Left ventricle myocardium superior (tissue), 1 donor: ENCODE measurements at regions of chr2 and their contacts with region 1.

Region 1: GRCh38 chr2:223101340-223102039 is 49.5 kb downstream of the KCNE4 start:
- DNase-seq: no peak
- ATAC-seq: peak; percentile 65

Region 2: DNA sequence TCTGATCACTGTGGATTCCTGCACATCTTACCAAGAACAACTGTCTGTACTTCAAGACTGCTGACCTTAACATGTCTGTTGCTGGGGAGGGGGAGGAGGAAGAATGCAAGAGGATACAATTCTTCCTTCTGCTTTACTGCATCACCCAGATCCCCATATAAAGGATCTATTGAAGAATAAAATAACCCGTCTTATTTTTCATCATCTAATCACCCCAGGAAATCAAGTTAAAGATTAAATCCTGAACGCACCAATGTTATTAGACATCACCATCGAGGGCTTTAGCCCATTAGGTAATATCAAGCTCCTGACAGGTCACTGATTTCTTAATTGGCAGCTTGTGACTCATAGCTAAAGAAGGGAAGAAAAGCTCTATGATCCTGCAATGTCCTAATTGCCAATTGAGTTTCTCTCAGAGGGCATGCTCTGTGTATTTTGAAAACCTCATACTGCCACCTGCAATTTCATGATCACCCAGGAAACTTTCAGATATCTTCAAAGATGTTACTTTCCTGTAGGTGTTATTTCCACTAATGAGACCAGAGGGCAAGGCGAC is 124.9 kb before region 1 on chr2:
- intact Hi-C with region 1: loop called (anchors 10 kb)
- DNase-seq: no peak
- ATAC-seq: no peak

Region 3: GRCh38 chr2:223692191-223692947 is 590.9 kb after region 1 on chr2:
- intact Hi-C with region 1: no loop called
- DNase-seq: no peak
- ATAC-seq: peak; percentile 60